ENCODE measurements at regions of chr16 and their contacts with region 1.

Region 1: GRCh38 chr16:84952335-84953189 is 58.8 kb downstream of the ZDHHC7 start:
- DNase-seq: peak; percentile 66
- H3K4me3 ChIP-seq: no peak overlapping the region
- H3K27ac ChIP-seq: no peak overlapping the region
- H3K27me3 ChIP-seq: no peaks in the 10 kb centered on the region
- CTCF ChIP-seq: peak; percentile 90

Region 2: GRCh38 chr16:84925092-84925772 is 27.3 kb before region 1 on chr16:
- CTCF ChIA-PET with region 1: interaction called, 12 read pairs
- POLR2A ChIA-PET with region 1: interaction called, 5 read pairs
- DNase-seq: no peak
- H3K4me3 ChIP-seq: no peak overlapping the region
- H3K27ac ChIP-seq: no peak overlapping the region
- H3K27me3 ChIP-seq: no peaks in the 10 kb centered on the region
- CTCF ChIP-seq: peak; percentile 73

Region 3: GRCh38 chr16:84933774-84934631 is 18.6 kb before region 1 on chr16:
- CTCF ChIA-PET with region 1: interaction called, 10 read pairs
- POLR2A ChIA-PET with region 1: no interaction called
- DNase-seq: no peak
- H3K4me3 ChIP-seq: no peak overlapping the region
- H3K27ac ChIP-seq: no peak overlapping the region
- H3K27me3 ChIP-seq: no peaks in the 10 kb centered on the region
- CTCF ChIP-seq: no peak

Measured in AG04450 (cell line).